HepG2 (cell line): ENCODE measurements at regions of chr4 and their contacts with region 1.

Region 1: DNA sequence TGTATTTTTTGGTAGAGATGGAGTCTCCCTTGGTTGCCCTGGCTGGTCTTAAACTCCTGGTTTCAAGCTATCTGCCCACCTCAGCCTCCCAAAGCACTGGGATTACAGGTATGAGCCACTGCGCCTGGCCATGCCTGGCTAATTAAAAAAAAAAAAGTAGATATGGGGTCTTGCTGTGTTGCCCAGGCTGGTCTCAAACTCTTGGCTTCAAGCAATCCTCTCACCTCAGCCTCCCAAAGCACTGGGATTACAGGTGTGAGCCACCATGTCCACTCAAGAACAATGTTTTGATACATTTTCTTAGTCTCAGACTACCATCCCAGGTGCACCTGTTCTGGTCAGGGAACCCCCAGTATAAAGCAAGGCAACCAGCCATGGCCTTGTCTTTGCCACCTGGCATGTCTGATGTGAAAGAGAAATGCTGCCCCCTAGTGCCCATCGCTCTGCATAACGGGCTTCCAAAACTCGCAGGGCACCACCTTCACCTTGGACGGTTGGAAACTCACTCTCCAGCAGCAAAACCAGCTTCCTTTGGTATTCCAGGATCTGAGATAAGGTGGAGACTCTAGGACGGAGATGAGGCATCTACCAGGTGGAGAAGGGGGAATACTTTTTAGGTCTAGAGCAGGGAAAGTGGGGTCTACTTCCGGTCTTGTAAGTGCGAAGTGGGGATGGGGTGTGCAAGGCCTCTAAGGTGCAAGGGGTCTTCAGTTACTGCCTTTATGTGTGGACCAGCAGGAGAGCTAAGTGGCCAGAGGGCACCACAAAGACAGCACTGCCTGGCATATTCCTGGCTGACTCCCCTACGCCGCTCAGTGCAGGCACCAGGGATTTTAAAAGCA is 47.7 kb upstream of the AFAP1 start:
- DNase-seq: peak; percentile 69
- ATAC-seq: peak; percentile 68
- H3K4me3 ChIP-seq: no peak overlapping the region
- H3K27ac ChIP-seq: no peak overlapping the region
- H3K4me1 ChIP-seq: peaks cover 32% of the 10 kb centered on the region
- H3K27me3 ChIP-seq: peaks cover 6 to 36% of the 10 kb centered on the region in 2 experiments
- CTCF ChIP-seq: peak; percentile 95
- EP300 ChIP-seq: no peak
- POLR2A ChIP-seq: no peak
- RAD21 ChIP-seq: peak; percentile 86

Region 2: DNA sequence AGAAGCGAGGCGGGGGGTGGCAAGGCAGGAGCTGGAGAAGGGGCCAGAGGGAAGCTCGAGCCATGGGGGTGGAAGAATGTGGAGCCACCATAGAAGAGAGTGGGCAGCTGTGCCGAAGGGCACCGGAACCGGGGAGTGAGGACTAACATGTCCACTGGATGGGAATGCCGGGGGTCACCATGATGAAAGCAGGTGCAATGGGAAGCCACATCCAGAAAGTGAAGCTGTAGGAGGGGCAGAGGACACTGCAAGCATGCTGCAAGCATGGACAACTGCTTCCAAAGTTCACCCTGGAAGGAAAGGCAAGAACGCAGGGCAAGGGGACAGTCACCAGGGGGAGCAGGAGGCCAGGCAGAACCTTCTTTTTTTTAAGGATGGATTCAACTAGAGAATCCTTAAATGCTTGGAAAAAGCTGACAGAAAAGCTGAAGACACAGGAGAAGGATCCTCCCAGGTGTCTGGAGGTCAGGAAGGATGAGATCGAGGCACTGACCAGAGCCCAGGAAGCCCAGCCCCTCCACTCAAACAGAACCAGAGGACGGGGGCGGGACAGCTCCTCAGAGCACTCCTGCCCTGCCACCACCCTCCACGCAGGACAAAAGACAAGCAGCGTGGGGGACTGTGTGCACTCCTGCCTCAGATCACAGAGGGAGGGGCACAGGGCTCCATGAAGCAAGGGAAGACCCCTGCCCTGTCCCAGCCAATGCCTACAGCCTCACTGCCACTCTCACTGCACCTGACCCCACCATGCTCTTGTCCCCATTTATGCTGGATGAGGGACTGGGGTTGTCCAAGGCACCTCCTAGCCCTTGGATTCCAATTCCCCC is 216.9 kb before region 1 on chr4:
- CTCF ChIA-PET with region 1: interaction called, 5 read pairs
- POLR2A ChIA-PET with region 1: no interaction called
- in situ Hi-C with region 1: no loop called
- intact Hi-C with region 1: loop called (anchors 5 kb)
- DNase-seq: peak; percentile 53
- ATAC-seq: peak; percentile 74
- H3K4me3 ChIP-seq: no peak overlapping the region
- H3K27ac ChIP-seq: no peak overlapping the region
- H3K4me1 ChIP-seq: peaks cover 88% of the 10 kb centered on the region
- H3K27me3 ChIP-seq: no peaks in the 10 kb centered on the region
- CTCF ChIP-seq: peak; percentile 67
- EP300 ChIP-seq: 0 out of 4 replicates have a peak, but pooled peaks of 1 of the 2 experiments have one; percentile 19
- POLR2A ChIP-seq: no peak
- RAD21 ChIP-seq: no peak; the same call in 1 of the 2 replicates

Region 3: DNA sequence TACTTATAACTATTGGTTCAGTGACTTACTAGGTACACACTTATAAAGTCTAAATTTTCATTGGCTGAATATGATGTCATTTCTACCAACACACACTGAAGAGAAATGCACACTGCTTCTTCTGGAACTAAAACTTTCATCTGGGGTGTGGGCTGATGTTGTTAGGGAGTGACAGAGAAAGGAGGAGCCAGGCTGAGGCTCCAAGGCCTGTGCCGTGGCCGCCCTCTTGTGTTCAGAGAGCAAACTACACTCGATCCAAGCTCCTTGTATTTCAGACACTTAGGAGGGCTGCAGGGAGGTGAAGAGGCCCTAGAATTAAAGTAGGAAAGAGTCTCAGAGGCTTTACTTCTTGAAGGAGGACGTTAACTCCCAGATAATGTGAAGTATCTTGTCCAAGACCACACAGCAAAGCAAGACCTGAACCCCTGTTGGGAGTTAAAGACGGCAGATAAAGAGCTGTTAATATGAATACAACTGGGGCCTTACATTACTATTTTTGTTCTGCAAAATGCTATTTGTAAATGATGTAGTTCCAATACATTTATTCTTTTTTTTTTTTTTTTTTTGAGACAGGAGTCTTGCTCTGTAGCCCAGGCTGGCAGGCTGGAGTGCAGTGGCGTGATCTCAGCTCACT is 185.2 kb before region 1 on chr4:
- CTCF ChIA-PET with region 1: interaction called, 44 read pairs
- POLR2A ChIA-PET with region 1: interaction called, 8 read pairs
- in situ Hi-C with region 1: loop called (anchors 5 kb)
- intact Hi-C with region 1: loop called (anchors 1 kb)
- DNase-seq: peak; percentile 67
- ATAC-seq: peak; percentile 43
- H3K4me3 ChIP-seq: no peak overlapping the region
- H3K27ac ChIP-seq: no peak overlapping the region
- H3K4me1 ChIP-seq: peaks cover 36% of the 10 kb centered on the region
- H3K27me3 ChIP-seq: no peaks in the 10 kb centered on the region
- CTCF ChIP-seq: peak; percentile 90
- EP300 ChIP-seq: no peak
- POLR2A ChIP-seq: no peak
- RAD21 ChIP-seq: peak; percentile 69

Region 4: GRCh38 chr4:7843831-7844593 is 143.4 kb before region 1 on chr4:
- CTCF ChIA-PET with region 1: interaction called, 3 read pairs
- POLR2A ChIA-PET with region 1: no interaction called
- in situ Hi-C with region 1: no loop called
- intact Hi-C with region 1: loop called (anchors 1 kb)
- DNase-seq: peak; percentile 70
- ATAC-seq: peak; percentile 99
- H3K4me3 ChIP-seq: no peak overlapping the region
- H3K27ac ChIP-seq: no peak overlapping the region
- H3K4me1 ChIP-seq: peaks cover 20% of the 10 kb centered on the region
- H3K27me3 ChIP-seq: no peaks in the 10 kb centered on the region
- CTCF ChIP-seq: peak; percentile 84
- EP300 ChIP-seq: no peak
- POLR2A ChIP-seq: no peak
- RAD21 ChIP-seq: peak; percentile 73

Region 5: GRCh38 chr4:7876201-7876875 is 111.0 kb before region 1 on chr4:
- CTCF ChIA-PET with region 1: interaction called, 4 read pairs
- POLR2A ChIA-PET with region 1: no interaction called
- in situ Hi-C with region 1: no loop called
- intact Hi-C with region 1: loop called (anchors 10 kb)
- DNase-seq: peak; percentile 55
- ATAC-seq: peak; percentile 99
- H3K4me3 ChIP-seq: no peak overlapping the region
- H3K27ac ChIP-seq: no peak overlapping the region
- H3K4me1 ChIP-seq: peaks cover 31% of the 10 kb centered on the region
- H3K27me3 ChIP-seq: no peaks in the 10 kb centered on the region
- CTCF ChIP-seq: peak; percentile 54
- EP300 ChIP-seq: no peak
- POLR2A ChIP-seq: no peak
- RAD21 ChIP-seq: peak; percentile 32; the same call in 1 of the 2 replicates

Region 6: GRCh38 chr4:7929118-7929951 is 58.0 kb before region 1 on chr4:
- CTCF ChIA-PET with region 1: no interaction called
- POLR2A ChIA-PET with region 1: interaction called, 3 read pairs
- in situ Hi-C with region 1: no loop called
- intact Hi-C with region 1: loop called (anchors 5 kb)
- DNase-seq: peak; percentile 56
- ATAC-seq: peak; percentile 92
- H3K4me3 ChIP-seq: no peak overlapping the region
- H3K27ac ChIP-seq: no peak overlapping the region
- H3K4me1 ChIP-seq: peaks cover 28% of the 10 kb centered on the region
- H3K27me3 ChIP-seq: no peaks in the 10 kb centered on the region
- CTCF ChIP-seq: peak; percentile 75
- EP300 ChIP-seq: no peak
- POLR2A ChIP-seq: no peak
- RAD21 ChIP-seq: peak; percentile 52; the same call in 1 of the 2 replicates